Sigmoid colon (tissue), 7 donors: ENCODE measurements at regions of chr6 and their contacts with region 1.

Region 1: GRCh38 chr6:6918216-6918983 is 189.4 kb upstream of the RREB1 start:
- DNase-seq: no peak
- H3K4me3 ChIP-seq: no peak overlapping the region
- H3K27ac ChIP-seq: no peak overlapping the region
- H3K4me1 ChIP-seq: peaks cover 0 to 21% (median 15%) of the 10 kb centered on the region in 4 donors
- H3K27me3 ChIP-seq: no peaks in the 10 kb centered on the region
- CTCF ChIP-seq: no peak
- EP300 ChIP-seq: no peak
- POLR2A ChIP-seq: no peak

Region 2: GRCh38 chr6:6724539-6725467 is 193.6 kb before region 1 on chr6:
- intact Hi-C with region 1: loop called (anchors 10 kb)
- DNase-seq: peak; percentile 82
- H3K4me3 ChIP-seq: peak overlapping the region; percentile 16 to 53 (median 45)
- H3K27ac ChIP-seq: peak overlapping the region; percentile 70 to 77 (median 76)
- H3K4me1 ChIP-seq: peaks cover 0 to 18% (median 16%) of the 10 kb centered on the region in 4 donors
- H3K27me3 ChIP-seq: no peaks in the 10 kb centered on the region
- CTCF ChIP-seq: peak; percentile 51 to 75 (median 64)
- EP300 ChIP-seq: no peak
- POLR2A ChIP-seq: no peak

Region 3: DNA sequence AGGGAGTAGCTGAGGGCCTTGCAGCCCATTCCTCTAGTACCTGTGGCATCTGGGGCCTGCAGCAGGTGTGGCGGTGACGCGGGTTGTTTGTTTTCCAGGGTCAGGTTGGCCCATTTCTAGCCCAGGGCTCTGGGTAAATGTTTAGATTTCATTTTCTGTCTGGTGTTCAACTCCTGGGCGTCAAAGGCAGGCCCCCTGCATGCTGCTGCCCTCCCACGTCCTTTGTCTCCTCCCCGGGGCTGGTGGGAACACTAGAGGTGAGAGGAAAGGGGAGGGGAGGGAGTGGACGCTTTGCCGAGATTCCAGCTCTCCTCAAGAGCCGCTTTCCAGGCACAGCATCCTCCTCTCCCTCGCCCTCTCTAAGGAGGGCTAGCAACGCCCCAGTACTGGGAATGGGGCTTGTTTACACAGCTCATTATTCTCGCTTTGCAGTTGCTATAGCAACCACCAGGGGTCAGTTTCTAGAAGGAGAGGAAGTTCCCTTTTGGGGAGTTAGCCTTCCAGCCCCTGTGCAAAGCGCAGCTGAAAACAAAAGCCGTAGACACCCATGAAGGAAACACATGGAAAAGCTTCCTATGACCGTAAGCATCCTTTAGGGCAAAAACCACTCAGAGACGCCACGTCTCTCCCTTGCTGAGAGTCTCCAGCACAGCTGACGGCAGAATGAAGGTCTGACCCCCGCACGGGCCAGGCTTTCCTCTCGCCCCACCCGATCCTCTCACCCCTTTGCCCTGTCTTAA is 159.3 kb before region 1 on chr6:
- intact Hi-C with region 1: loop called (anchors 10 kb)
- DNase-seq: peak; percentile 72
- H3K4me3 ChIP-seq: no peak overlapping the region
- H3K27ac ChIP-seq: peak overlapping the region in 1 of 4 donors; percentile 3
- H3K4me1 ChIP-seq: peaks cover 0 to 12% (median 5%) of the 10 kb centered on the region in 4 donors
- H3K27me3 ChIP-seq: peaks cover 0 to 5% (median 0%) of the 10 kb centered on the region in 3 donors
- CTCF ChIP-seq: peak in 3 of 4 experiments; percentile 19 to 30 (median 27)
- EP300 ChIP-seq: no peak
- POLR2A ChIP-seq: no peak